ENCODE measurements at regions of chr9 and their contacts with region 1.

Region 1: GRCh38 chr9:69421908-69422801 is 97.1 kb downstream of the ENTREP1 start:
- DNase-seq: peak; percentile 29
- H3K4me3 ChIP-seq: no peak overlapping the region
- H3K27ac ChIP-seq: no peak overlapping the region
- H3K27me3 ChIP-seq: no peaks in the 10 kb centered on the region
- CTCF ChIP-seq: peak; percentile 78

Region 2: DNA sequence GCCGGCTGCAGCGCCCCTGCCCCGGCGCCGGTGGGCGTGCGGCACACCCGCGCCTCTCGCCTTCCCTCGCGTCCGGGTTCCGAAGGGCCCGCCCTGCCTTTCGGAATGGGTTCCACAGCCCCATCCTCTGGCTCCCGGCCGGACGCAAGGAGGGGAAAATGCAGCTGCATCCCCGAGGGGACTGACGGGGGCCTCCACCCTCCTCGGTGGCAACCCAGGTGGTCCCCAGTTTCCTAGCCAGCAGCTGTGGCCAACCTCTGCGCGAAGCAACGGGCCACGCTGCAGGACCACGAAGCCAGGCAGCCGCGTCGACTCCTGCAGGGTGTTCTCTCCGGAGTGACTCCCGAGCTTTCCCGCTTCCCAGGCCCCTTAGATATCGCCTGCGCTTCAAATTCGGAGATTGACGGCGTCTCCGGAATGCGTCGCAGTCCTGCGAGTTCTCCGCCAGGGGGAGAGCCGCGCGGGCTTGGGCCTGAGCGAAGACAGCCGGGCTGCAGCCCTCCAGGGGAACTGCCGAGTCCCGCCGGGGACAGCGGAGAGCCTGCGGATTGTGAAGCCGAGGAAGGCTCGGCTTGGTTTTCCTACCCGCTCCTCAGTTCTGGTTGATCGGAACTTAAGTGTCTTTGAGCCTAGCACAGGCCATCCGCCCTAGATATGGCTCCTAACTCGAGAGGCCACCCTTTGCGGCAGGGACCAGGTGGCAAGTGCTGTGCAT is 250.6 kb after region 1 on chr9:
- CTCF ChIA-PET with region 1: interaction called, 20 read pairs
- POLR2A ChIA-PET with region 1: no interaction called
- DNase-seq: peak; percentile 72
- H3K4me3 ChIP-seq: peak overlapping the region; percentile 82
- H3K27ac ChIP-seq: no peak overlapping the region
- H3K27me3 ChIP-seq: no peaks in the 10 kb centered on the region
- CTCF ChIP-seq: peak; percentile 94

Region 3: GRCh38 chr9:69877854-69878514 is 455.8 kb after region 1 on chr9:
- CTCF ChIA-PET with region 1: interaction called, 35 read pairs
- POLR2A ChIA-PET with region 1: no interaction called
- DNase-seq: no peak
- H3K4me3 ChIP-seq: no peak overlapping the region
- H3K27ac ChIP-seq: no peak overlapping the region
- H3K27me3 ChIP-seq: no peaks in the 10 kb centered on the region
- CTCF ChIP-seq: peak; percentile 60

Region 4: DNA sequence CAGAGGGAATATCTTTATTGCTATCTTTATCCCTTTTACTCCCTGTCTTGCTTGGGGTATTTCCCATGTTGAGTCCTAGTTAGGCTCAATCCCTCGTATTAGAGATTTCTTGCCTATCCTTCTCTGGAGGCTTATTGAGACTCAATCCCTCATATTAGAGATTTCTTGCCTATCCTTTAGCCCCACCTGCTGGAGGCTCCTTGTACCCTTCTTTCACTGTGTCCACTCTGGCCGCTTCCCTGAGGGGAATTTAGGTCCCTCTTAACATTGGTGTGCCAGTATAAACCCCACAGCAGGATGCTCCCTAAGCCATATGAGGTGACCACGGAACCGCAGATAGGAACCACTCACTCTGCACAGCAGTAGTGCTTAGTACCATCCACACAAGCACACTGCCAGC is 510.7 kb after region 1 on chr9:
- CTCF ChIA-PET with region 1: interaction called, 10 read pairs
- POLR2A ChIA-PET with region 1: no interaction called
- DNase-seq: no peak
- H3K4me3 ChIP-seq: no peak overlapping the region
- H3K27ac ChIP-seq: no peak overlapping the region
- H3K27me3 ChIP-seq: no peaks in the 10 kb centered on the region
- CTCF ChIP-seq: peak; percentile 17; the same call in 1 of the 2 replicates